BJ (cell line): ENCODE measurements at regions of chr2 and their contacts with region 1.

Region 1: GRCh38 chr2:174748948-174749347 is 15.3 kb downstream of the CHRNA1 start:
- DNase-seq: no peak
- H3K4me3 ChIP-seq: no peak overlapping the region
- H3K27me3 ChIP-seq: peaks cover 3% of the 10 kb centered on the region; the same call in 1 of the 2 replicates
- CTCF ChIP-seq: peak; percentile 81

Region 2: GRCh38 chr2:174711206-174711605 is 37.7 kb before region 1 on chr2:
- CTCF ChIA-PET with region 1: no interaction called
- POLR2A ChIA-PET with region 1: no interaction called
- DNase-seq: no peak
- H3K4me3 ChIP-seq: no peak overlapping the region
- H3K27me3 ChIP-seq: no peaks in the 10 kb centered on the region; the same call in 1 of the 2 replicates
- CTCF ChIP-seq: no peak

Region 3: GRCh38 chr2:174738841-174739240 is 10.1 kb before region 1 on chr2:
- CTCF ChIA-PET with region 1: interaction called, 14 read pairs
- POLR2A ChIA-PET with region 1: no interaction called
- DNase-seq: no peak
- H3K4me3 ChIP-seq: no peak overlapping the region
- H3K27me3 ChIP-seq: peaks cover 12% of the 10 kb centered on the region
- CTCF ChIP-seq: no peak

Region 4: DNA sequence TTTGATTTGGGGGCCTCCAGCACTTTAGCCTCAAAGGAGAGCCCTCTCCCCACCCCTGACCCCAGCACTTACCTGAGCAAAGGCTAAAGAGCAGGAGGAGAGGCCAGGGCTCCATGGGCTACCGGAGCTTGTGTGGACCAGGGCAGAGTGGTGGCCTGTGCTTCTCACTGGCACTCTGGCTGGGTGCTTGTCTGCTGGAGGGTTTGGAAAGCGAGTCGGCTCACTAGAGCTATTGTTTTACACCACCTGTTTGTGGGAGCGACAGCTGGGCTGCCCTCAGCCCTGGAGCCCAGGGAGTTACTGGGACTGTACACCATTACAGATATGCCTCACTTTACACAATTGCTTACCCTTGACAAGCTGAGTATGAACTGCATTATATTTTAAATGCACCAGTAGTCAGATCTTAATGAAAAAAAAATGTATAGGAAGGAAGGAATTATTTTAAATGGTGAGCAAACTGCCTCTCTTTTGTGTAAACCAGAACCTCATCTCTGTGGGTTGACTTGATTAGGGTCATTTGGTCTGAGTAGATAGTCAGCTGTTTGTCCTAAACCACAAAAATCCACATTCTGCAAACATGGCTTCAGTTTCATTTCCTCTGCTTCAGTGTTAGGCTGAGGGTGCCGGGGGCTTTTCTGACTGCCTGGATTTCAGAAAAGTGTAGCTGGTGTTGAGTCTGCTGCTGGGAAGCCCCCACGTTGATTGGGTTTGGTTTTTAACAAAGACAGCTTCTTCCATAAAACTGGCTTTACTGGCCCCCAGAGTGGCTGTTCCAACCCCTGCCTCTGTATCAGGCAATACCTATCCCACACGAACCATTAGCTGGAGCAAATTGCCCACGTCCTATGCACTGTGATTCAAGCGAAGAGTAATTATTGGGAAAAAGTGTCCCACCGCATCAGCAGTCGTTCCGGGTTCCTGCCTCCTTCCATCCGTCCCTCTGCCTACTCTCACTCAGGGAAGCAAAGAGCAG is 15.6 kb after region 1 on chr2 and contains the start of gene CHRNA1:
- CTCF ChIA-PET with region 1: interaction called, 40 read pairs
- POLR2A ChIA-PET with region 1: no interaction called
- DNase-seq: no peak
- H3K4me3 ChIP-seq: no peak within 1 kb of the TSS
- H3K27me3 ChIP-seq: no peaks in the 10 kb centered on the region
- CTCF ChIP-seq: no peak
- polyA plus RNA-seq, gene CHRNA1: 0.20 TPM in 1 of 2 replicates, not detected in the other

Region 5: DNA sequence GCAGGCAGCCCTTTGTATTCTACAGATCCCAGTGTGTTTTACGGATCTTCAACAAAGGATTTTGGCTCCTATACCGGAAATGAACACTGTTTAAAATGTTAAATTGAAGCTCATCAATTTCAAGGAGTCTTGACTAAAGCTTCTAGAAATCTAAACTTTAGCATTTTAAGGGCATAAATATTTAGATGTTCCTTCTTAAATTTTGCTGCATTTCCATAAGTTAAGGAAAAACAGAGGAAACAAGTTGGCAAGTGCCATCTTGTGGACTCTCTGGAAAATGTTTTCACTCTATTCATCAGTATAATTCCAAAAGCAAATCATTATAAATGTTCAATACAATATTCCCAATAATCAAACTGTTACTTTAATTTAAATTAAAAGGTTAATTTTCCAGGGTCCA is 236.7 kb after region 1 on chr2:
- CTCF ChIA-PET with region 1: interaction called, 30 read pairs
- POLR2A ChIA-PET with region 1: no interaction called
- DNase-seq: no peak
- H3K4me3 ChIP-seq: no peak overlapping the region
- H3K27me3 ChIP-seq: no peaks in the 10 kb centered on the region
- CTCF ChIP-seq: peak; percentile 57